Panc1 (cell line): ENCODE measurements at regions of chr11 and their contacts with region 1.

Region 1: DNA sequence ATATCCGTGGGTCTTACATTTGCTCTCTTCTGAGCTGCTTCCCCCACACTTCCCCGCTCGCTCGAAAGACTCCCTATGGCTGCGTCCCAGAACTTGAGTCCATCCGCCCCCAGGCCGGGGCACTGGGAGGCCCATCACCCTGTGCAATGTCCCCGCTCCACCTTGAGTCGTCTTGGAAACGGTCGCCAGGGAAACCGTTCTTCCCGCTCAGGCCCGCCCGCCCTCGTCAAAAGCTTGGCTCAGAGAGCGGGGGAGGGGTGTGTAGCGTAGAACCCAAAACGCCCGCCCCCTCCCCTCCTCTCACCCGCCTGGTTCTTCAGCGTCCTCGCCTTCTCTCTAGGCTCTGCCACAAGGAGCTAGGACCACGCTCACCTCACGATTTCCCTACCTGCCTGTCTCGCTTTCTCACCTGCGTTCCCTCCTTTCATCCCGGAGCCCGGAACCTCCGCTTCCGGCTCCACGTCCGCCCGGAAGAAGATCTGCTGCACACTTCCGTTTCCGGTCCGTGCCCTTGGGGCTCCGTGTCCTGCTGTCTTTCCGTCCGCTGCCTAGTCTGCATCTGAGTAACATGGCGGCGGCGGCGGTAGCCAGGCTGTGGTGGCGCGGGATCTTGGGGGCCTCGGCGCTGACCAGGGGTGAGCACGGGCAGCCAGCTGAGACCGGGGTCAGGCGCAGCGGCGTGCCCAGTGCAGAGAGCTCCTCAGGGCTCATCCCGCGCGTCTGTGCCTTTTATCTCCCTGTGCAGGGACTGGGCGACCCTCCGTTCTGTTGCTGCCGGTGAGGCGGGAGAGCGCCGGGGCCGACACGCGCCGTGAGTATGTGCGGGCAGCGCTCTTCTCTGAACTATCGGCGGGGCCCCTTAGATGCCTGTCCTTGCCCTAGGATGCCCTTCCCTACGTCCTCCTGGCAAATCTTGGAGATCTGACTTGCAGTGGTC is at the starts of genes KBTBD4 and NDUFS3:
- DNase-seq: peak; percentile 32
- ATAC-seq: peak; percentile 94
- H3K4me3 ChIP-seq: peak within 1 kb of the TSS; percentile 98 to 100
- H3K27ac ChIP-seq: peak within 1 kb of the TSS; percentile 90
- H3K4me1 ChIP-seq: peaks cover 17% of the 10 kb centered on the region
- H3K27me3 ChIP-seq: no peaks in the 10 kb centered on the region
- CTCF ChIP-seq: no peak
- total RNA-seq, gene KBTBD4: 23.2 TPM
- total RNA-seq, gene NDUFS3: 135 TPM

Region 2: GRCh38 chr11:47399860-47400767 is 178.7 kb before region 1 on chr11:
- CTCF ChIA-PET with region 1: no interaction called
- POLR2A ChIA-PET with region 1: no interaction called
- in situ Hi-C with region 1: no loop called
- intact Hi-C with region 1: no loop called
- DNase-seq: no peak
- ATAC-seq: peak; percentile 46; the same call in 1 of the 2 replicates
- H3K4me3 ChIP-seq: peak overlapping the region; percentile 31 to 48
- H3K27ac ChIP-seq: no peak overlapping the region
- H3K4me1 ChIP-seq: peaks cover 5% of the 10 kb centered on the region
- H3K27me3 ChIP-seq: no peaks in the 10 kb centered on the region
- CTCF ChIP-seq: no peak

Region 3: GRCh38 chr11:47552056-47552565 is 26.7 kb before region 1 on chr11:
- CTCF ChIA-PET with region 1: interaction called, 3 read pairs
- POLR2A ChIA-PET with region 1: interaction called, 13 read pairs
- in situ Hi-C with region 1: no loop called
- intact Hi-C with region 1: no loop called
- DNase-seq: no peak
- ATAC-seq: peak; percentile 31
- H3K4me3 ChIP-seq: peak overlapping the region; percentile 75 to 97
- H3K27ac ChIP-seq: peak overlapping the region; percentile 98
- H3K4me1 ChIP-seq: peaks cover 19% of the 10 kb centered on the region
- H3K27me3 ChIP-seq: no peaks in the 10 kb centered on the region
- CTCF ChIP-seq: no peak

Region 4: DNA sequence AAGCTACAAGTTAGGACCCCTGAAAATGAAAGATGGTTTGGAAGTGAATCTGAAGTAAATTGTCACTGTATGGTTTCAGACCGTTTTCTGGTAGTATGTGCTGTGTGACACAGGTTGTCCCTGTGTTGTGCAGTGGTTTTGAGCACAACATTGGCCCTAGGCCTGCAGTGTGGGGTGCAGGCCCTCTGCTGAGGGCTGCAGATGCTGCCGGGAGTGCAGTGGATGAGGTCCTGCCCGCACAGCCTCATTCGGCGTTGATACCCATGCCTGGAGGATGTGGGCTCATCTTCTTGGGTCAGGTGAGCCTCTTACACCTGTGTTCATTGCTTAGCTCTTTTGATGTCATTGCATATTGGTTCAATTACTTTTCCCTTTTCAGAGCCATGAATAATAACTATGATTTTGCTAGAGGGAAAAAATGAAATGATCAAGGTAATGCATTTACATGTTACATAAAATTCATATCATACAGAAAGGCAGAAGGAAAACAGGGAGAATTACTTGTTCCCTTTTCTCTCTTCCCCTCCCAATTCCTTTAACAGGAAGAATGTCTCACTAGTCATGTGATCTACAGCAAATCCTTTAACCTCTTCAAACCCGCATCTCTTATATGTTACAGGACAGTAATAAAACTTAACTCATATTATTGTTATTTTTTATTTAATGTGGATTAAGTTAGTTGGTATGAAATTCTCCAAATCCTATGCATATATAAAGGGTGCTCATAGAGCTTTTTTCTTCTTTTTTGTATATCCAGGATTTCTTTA is 450.3 kb after region 1 on chr11:
- CTCF ChIA-PET with region 1: no interaction called
- POLR2A ChIA-PET with region 1: interaction called, 10 read pairs
- in situ Hi-C with region 1: no loop called
- intact Hi-C with region 1: no loop called
- DNase-seq: no peak
- ATAC-seq: no peak
- H3K4me3 ChIP-seq: no peak overlapping the region
- H3K27ac ChIP-seq: no peak overlapping the region
- H3K4me1 ChIP-seq: peaks cover 23% of the 10 kb centered on the region
- H3K27me3 ChIP-seq: no peaks in the 10 kb centered on the region
- CTCF ChIP-seq: no peak